Activated T-helper 2 cell treated with anti-CD3 and anti-CD28 coated beads, Interferon-gamma antibody, Interleukin-2, Interleukin-4, amounts not matched to agents 10 μg/mL and 5 μg/mL and 100 μg/mL, durations not matched to agents 14 hours and 24 hours and 36 hours (primary cell): ENCODE measurements at regions of chr6 and their contacts with region 1.

Region 1: DNA sequence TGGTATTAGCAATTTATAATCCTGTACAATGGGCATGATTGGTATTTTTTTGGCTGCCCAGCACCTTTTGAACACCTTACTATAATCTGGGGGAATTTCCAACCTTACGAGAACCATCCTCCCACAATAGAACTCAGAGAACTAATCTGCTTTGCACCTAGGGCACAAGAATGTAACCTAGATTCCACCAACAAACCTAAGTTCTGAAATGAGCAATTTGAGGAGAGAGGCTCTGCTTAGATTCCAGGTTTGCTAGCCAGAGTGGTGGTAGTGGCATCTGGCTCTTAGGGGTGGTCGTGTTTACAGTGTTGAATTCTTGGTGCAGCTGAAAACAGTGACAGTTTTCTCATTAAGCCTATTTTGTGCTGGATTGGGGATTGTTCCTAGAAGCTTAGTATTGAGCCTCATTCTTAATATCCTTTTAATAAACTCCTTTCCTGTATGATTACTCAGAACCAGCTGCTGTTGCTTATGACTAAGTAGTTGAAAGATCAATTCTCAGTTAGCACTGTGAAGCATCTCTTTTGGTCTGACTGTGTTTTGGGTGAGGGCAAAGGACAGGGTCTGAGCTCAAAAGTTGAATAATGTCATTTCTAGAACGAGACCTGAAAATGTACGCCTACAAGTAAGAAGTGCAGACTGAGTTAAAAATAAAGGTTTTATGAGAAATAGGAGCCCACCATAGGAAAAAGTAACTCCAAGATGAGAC is 385.6 kb downstream of the CDKAL1 start:
- DNase-seq: no peak
- H3K4me3 Mint-ChIP-seq: no peak overlapping the region
- H3K27ac Mint-ChIP-seq: peak overlapping the region; percentile 54
- H3K4me1 Mint-ChIP-seq: peaks cover 22% of the 10 kb centered on the region
- H3K27me3 Mint-ChIP-seq: no peaks in the 10 kb centered on the region

Region 2: DNA sequence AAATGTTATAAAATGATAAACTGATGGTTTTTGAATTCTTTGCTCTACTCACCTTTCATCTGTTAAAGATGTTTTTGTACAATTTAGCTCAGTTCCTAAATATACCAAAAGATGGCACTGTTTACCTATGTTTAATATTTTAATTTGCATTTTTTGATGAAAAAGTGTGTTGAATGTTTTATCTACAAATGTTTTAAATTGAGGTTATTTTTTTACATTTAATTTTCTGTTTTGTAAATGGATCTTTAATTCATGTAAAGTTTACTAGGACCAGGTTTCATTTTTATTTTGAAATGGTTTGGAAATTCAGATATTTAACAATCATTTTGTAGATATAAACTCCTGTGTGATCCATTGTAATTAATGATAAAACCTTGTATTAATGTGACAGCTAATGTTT is 355.6 kb before region 1 on chr6:
- intact Hi-C with region 1: loop called (anchors 10 kb)
- DNase-seq: no peak
- H3K4me3 Mint-ChIP-seq: no peak overlapping the region
- H3K27ac Mint-ChIP-seq: no peak overlapping the region
- H3K4me1 Mint-ChIP-seq: peaks cover 22% of the 10 kb centered on the region
- H3K27me3 Mint-ChIP-seq: no peaks in the 10 kb centered on the region

Region 3: GRCh38 chr6:20847904-20848303 is 71.9 kb before region 1 on chr6:
- intact Hi-C with region 1: no loop called
- DNase-seq: no peak
- H3K4me3 Mint-ChIP-seq: no peak overlapping the region
- H3K27ac Mint-ChIP-seq: no peak overlapping the region
- H3K4me1 Mint-ChIP-seq: peaks cover 29% of the 10 kb centered on the region
- H3K27me3 Mint-ChIP-seq: no peaks in the 10 kb centered on the region

Region 4: DNA sequence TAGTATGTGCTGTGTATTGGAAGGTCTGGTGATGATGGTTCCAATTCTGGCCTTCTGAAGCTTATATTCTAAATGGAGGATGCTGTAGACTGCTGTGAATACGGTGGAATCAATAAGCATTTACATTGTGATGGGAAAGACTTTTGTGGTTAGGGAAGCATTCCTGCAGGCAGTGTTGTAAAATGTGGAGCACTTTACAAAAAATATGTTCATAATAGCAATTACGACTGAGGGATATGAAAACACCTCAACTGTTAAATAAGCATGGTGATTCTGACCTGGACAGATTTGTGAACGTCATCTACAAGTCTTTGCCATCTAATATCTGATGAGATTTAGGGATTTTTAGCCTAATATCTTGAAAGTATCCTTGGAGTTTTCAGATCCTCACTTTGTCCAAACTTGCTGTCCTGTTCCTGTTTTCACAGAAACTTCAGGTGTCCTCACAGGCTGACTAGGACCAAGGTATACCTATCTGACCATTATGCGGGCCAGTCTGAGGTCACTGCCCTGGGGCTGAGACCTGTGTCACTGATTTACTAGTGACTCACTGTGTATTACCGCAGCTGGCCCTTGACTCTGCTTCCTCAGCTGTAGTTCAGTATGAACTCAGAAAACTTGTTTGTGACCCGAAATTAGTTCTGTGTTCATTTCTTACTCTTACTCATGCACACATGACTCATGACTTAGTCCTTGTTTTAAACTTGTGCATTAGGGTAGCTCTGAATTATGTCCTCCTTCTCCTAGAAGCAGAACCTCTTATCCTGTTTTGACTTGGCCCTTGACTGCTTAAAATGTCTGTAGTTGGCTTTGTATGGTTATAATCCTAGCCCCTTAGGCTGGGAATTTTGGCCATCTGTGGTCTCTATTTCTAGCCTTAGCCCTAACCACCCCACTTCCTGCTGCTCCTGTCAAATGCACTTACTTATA is 42.6 kb before region 1 on chr6:
- intact Hi-C with region 1: loop called (anchors 1 kb)
- DNase-seq: no peak
- H3K4me3 Mint-ChIP-seq: no peak overlapping the region
- H3K27ac Mint-ChIP-seq: peak overlapping the region; percentile 72
- H3K4me1 Mint-ChIP-seq: peaks cover 16% of the 10 kb centered on the region
- H3K27me3 Mint-ChIP-seq: no peaks in the 10 kb centered on the region

Region 5: GRCh38 chr6:21003780-21004541 is 84.1 kb after region 1 on chr6:
- intact Hi-C with region 1: no loop called
- DNase-seq: no peak
- H3K4me3 Mint-ChIP-seq: no peak overlapping the region
- H3K27ac Mint-ChIP-seq: no peak overlapping the region
- H3K4me1 Mint-ChIP-seq: peaks cover 3% of the 10 kb centered on the region
- H3K27me3 Mint-ChIP-seq: no peaks in the 10 kb centered on the region

Region 6: DNA sequence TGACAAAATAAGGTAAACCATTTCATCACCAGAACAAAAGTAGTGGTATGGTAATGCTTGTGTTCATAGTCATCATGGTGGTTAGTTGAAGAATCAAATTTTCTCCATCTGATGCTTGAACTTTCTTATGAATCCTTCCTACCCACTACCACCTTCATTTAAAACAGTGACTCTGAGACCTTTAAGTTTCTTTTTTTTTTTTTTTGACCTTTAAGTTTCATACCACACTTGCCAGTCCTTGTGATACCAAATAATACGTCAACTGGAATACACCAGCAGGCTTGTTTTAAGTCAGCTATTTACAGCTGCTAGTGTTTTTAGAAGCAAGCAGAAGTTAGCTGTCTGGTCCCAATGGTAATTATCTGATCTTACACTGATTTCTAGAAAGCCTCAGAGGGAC is 260.3 kb after region 1 on chr6:
- intact Hi-C with region 1: loop called (anchors 1 kb)
- DNase-seq: no peak
- H3K4me3 Mint-ChIP-seq: no peak overlapping the region
- H3K27ac Mint-ChIP-seq: peak overlapping the region; percentile 53
- H3K4me1 Mint-ChIP-seq: peaks cover 23% of the 10 kb centered on the region
- H3K27me3 Mint-ChIP-seq: no peaks in the 10 kb centered on the region

Region 7: DNA sequence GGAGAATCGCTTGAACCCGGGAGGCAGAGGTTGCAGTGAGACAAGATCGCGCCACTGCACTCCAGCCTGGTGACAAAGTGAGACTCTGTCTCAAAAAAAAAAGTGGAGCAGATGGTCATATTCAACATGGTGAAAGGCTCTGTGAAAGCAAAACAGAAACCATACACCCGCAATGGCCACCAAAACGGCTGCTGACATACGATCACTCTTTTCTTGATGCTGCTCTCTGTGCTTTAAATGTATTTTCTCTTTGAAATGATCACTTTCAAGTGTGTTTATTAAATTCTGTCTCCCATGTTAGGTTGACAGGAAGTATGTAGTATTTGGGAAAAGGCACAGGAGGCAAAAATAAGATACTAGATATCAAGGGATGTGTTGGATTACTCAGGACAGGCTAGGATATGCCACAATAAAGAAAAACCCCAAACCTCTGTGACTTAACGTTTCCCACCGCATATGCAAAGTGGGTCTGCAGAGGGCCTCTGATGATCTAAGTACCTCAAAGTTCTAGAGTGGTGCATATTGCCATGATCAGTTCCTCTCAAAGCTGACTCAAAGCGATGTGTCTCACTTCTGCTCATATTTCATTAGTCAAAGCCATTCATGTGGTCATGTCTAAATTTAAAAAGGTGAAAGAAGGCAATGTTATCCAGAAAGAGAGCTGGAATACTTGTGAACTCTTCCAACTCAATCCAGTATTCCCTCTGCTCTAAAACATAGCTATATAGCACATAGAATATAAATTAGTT is 518.6 kb after region 1 on chr6:
- intact Hi-C with region 1: loop called (anchors 1 kb)
- DNase-seq: peak; percentile 23
- H3K4me3 Mint-ChIP-seq: peak overlapping the region; percentile 74
- H3K27ac Mint-ChIP-seq: peak overlapping the region; percentile 96
- H3K4me1 Mint-ChIP-seq: peaks cover 22% of the 10 kb centered on the region
- H3K27me3 Mint-ChIP-seq: peaks cover 14% of the 10 kb centered on the region